ENCODE measurements at regions of chr12 and their contacts with region 1.

Region 1: DNA sequence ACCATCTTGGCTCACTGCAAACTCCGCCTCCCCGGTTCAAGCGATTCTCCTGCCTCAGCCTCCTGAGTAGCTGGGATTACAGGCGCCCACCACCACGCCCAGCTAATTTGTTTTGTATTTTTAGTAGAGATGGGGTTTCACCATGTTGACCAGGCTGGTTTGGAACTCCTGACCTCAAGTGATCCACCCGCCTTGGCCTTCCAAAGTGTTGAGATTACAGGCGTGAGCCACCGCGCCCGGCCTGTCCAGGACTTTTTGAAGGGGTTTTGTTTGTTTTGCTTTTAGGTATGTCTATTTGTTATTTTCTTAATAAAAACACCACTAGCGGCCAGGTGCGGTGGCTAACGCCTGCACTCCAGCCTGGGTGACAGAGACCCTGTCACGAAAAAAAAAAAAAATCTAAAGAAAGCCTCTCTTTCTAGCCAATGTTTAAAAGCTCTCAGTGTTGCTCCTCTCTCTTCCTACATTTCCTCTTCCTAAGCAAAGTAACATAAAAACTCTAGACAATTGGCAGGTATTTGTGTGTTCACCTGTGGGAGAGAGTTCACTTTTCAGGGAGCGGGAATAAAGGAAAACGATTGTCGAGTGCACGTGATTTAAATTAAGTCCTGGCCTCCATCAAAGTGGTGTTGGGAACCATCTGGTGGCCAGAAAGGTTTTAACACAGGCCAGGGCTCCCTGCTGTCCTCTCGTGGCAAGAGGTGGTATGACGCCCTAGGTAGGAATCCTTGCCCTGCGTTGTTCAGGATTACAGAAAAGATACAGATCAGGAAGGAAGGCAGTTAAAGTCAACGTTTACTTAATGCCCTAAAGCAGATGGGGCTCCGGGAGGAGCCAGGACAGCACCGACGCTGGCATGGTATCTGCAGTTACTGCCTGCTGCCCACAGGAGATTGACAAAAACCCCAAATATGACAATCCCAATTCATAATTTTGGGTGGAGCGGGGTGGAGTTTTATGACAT is 36.2 kb upstream of the ATP23 start:
- DNase-seq: peak; percentile 70
- H3K4me3 Mint-ChIP-seq: peak overlapping the region; percentile 32
- H3K27ac Mint-ChIP-seq: peak overlapping the region; percentile 0
- H3K4me1 Mint-ChIP-seq: peaks cover 16% of the 10 kb centered on the region
- H3K27me3 Mint-ChIP-seq: peaks cover 21% of the 10 kb centered on the region

Region 2: GRCh38 chr12:57583008-57583831 is 321.9 kb before region 1 on chr12:
- intact Hi-C with region 1: loop called (anchors 1 kb)
- DNase-seq: peak; percentile 61
- H3K4me3 Mint-ChIP-seq: no peak overlapping the region
- H3K27ac Mint-ChIP-seq: no peak overlapping the region
- H3K4me1 Mint-ChIP-seq: peaks cover 7% of the 10 kb centered on the region
- H3K27me3 Mint-ChIP-seq: peaks cover 3% of the 10 kb centered on the region

Region 3: DNA sequence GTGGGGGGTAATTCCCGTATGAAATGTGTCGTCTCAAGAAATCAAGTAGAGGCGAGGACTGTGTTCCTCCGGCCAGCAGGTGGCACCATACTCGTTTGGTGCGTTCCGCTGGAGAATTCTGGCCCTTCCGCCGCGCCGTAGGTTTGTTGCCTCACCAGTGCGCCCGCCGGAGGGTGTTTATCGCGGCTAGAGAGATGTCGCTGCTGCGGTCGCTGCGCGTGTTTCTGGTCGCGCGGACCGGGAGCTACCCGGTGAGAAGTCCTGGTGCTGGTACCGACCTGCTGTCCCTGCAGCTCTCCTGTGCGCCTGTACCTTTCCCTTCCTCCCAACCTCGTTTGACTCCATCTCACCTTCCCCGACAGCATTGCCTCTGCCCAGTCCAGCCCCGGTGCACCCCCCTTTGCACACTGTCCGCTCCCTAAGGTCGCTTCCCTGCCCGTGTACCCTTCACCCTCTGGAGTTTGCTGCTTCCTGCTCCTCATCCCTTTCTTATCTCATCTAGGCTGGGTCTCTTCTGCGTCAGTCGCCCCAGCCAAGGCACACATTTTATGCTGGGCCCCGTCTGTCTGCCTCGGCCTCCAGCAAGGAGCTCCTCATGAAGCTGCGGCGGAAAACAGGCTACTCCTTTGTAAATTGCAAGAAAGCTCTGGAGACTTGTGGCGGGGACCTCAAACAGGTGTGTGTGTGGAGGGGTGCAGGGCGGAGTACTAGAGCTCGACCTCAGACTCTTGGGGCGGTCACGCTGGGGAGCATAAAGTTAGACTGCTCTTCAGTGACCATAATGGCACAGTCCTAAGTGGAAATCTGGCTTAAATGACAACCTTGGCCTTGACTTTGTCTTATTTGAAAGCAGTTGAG is 122.3 kb before region 1 on chr12 and contains the start of gene TSFM:
- intact Hi-C with region 1: loop called (anchors 1 kb)
- DNase-seq: peak; percentile 93
- H3K4me3 Mint-ChIP-seq: peak within 1 kb of the TSS; percentile 98
- H3K27ac Mint-ChIP-seq: peak within 1 kb of the TSS; percentile 98
- H3K4me1 Mint-ChIP-seq: peaks cover 44% of the 10 kb centered on the region
- H3K27me3 Mint-ChIP-seq: no peaks in the 10 kb centered on the region
- total RNA-seq, gene TSFM: 63.5 and 68.6 TPM in 2 replicates

Region 4: GRCh38 chr12:57803319-57803893 is 101.7 kb before region 1 on chr12:
- intact Hi-C with region 1: loop called (anchors 1 kb)
- DNase-seq: peak; percentile 8
- H3K4me3 Mint-ChIP-seq: no peak overlapping the region
- H3K27ac Mint-ChIP-seq: no peak overlapping the region
- H3K4me1 Mint-ChIP-seq: no peaks in the 10 kb centered on the region
- H3K27me3 Mint-ChIP-seq: no peaks in the 10 kb centered on the region

Region 5: GRCh38 chr12:57836442-57837375 is 68.4 kb before region 1 on chr12:
- intact Hi-C with region 1: loop called (anchors 1 kb)
- DNase-seq: peak; percentile 33
- H3K4me3 Mint-ChIP-seq: peak overlapping the region; percentile 47
- H3K27ac Mint-ChIP-seq: peak overlapping the region; percentile 87
- H3K4me1 Mint-ChIP-seq: peaks cover 84% of the 10 kb centered on the region
- H3K27me3 Mint-ChIP-seq: no peaks in the 10 kb centered on the region

Region 6: GRCh38 chr12:57935839-57936512 is 30.8 kb after region 1 on chr12:
- intact Hi-C with region 1: loop called (anchors 1 kb)
- DNase-seq: peak; percentile 92
- H3K4me3 Mint-ChIP-seq: peak overlapping the region; percentile 94
- H3K27ac Mint-ChIP-seq: peak overlapping the region; percentile 99
- H3K4me1 Mint-ChIP-seq: peaks cover 36% of the 10 kb centered on the region
- H3K27me3 Mint-ChIP-seq: no peaks in the 10 kb centered on the region

Measured in activated T-helper 1 cell treated with anti-CD3 and anti-CD28 coated beads, Interleukin-12 subunit alpha, Interleukin-12 subunit beta, Interleukin-2, Interleukin-4 antibody, amounts not matched to agents 30 ng/mL and 10 ng/mL and 1 ng/mL, durations not matched to agents 14 hours and 24 hours and 36 hours (primary cell).